PC-3 (cell line): ENCODE measurements at regions of chr4 and their contacts with region 1.

Region 1: GRCh38 chr4:3114377-3114776 is 39.9 kb downstream of the HTT start:
- DNase-seq: no peak
- ATAC-seq: no peak
- H3K4me3 ChIP-seq: no peak overlapping the region
- H3K27ac ChIP-seq: no peak overlapping the region
- H3K4me1 ChIP-seq: peaks cover 20% of the 10 kb centered on the region; the same call in 1 of the 2 replicates
- H3K27me3 ChIP-seq: no peaks in the 10 kb centered on the region
- CTCF ChIP-seq: no peak

Region 2: DNA sequence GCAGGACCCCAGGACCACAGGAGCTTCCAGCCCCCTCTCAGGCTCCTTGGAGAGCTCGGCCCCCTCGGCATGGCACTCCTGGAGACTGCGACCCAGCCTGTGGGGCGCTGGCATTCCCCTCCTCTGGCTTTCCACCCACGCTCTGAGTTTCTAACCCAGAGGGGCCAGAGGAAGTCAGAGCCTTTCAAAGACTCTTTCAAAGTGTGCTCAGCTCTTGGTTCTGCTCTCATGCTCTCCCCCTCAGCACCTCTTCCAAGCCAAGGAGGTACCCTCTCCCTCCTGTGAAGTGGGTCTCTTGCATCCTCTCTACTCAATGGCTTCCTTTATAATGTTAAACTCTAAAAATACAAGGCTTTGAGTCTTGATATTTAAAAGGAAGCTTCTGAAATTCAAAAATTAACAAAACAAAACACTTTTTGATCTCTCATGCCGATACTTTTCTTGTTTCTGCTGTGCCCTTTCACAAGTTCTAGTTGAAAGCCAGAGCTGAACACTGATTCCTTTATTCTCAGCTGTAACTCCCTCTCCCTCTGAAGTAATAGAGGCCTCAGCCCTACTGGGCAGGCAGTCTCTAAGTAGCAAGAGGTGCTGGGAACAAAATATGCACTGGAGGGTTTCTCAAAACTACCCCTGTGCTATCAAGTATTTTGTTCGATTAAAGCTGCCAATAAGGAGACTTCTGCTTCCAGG is 972.5 kb before region 1 on chr4:
- CTCF ChIA-PET with region 1: no interaction called
- POLR2A ChIA-PET with region 1: no interaction called
- intact Hi-C with region 1: no loop called
- DNase-seq: no peak
- ATAC-seq: no peak
- H3K4me3 ChIP-seq: no peak overlapping the region
- H3K27ac ChIP-seq: no peak overlapping the region
- H3K4me1 ChIP-seq: no peaks in the 10 kb centered on the region; the same call in 1 of the 2 replicates
- H3K27me3 ChIP-seq: no peaks in the 10 kb centered on the region
- CTCF ChIP-seq: no peak

Region 3: DNA sequence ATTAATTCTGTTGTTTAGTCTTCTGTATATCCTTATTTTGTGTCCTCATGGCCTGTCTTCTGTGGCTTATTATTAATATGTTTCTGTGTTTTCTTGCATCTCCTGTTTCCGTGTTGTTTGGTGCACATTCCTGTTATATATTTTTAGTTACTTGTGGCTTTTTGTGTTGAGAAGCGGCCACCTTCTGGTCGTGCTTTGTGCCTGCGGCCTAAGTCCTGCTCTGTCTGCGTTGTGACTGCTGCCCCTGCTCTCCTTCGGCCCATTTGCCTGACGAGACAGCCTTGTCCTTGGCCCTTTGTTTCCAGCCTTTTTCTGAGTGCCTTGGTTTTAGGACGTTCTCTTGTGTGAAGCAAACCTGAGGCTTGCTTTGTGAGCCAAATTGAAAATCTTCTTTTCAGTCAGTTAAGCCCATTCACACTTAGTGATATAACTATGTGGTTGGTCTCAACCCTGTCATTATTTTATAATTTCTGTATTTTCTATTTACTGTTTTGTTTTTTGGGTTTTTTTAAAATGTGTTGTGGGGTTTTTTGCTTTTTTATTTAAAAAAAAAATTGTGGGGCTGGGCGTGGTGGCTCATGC is 402.0 kb before region 1 on chr4:
- CTCF ChIA-PET with region 1: no interaction called
- POLR2A ChIA-PET with region 1: no interaction called
- intact Hi-C with region 1: no loop called
- DNase-seq: no peak
- ATAC-seq: no peak
- H3K4me3 ChIP-seq: no peak overlapping the region
- H3K27ac ChIP-seq: no peak overlapping the region
- H3K4me1 ChIP-seq: no peaks in the 10 kb centered on the region
- H3K27me3 ChIP-seq: no peaks in the 10 kb centered on the region
- CTCF ChIP-seq: peak; percentile 48

Region 4: DNA sequence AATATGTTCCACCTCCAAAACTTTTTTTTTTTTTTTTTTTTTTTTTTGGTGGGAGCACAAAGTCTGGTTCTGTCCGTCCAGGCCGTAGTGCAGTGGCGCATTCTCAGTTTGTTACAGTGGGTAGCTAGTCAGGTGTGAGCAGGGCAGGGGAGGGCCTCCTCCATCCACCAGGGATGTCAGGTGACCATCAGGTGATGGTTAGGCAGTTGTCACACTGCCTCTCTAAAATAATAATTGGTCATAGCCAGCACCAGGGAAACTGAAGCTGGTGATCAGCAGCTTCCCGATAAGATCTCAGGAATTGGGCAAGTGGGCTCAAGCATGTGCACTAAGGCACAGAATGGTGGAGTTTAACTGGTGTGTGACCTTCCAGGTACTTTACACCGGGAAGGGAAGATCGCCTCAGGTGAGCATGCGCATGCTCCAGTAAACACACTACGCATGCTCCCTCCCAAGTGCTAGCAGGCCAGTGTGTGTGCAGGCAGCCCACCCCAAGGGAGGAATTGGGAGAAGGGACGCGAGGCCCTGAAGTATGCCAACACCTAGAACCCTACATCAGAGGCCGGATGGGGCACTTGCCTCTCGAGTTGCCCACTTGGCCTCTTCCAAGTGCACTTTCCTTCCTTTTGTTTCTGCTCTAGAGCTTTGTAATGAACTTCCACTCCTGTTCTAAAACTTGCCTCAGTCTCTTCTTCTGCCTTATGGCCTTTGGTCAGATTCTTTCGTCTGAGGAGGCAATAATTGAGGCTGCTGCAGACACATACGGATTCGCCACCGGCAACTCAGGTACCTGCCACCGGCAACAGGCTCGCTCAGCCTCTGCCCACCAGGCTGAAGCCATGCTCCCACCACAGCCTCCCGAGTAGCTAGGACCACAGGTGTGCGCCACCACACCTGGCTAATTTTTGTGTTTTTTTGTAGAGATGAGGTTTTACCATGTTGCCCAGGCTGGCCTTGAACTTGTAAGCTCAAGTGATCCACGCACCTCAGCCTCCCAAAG is 385.2 kb before region 1 on chr4:
- CTCF ChIA-PET with region 1: interaction called, 11 read pairs
- POLR2A ChIA-PET with region 1: no interaction called
- intact Hi-C with region 1: no loop called
- DNase-seq: no peak
- ATAC-seq: no peak
- H3K4me3 ChIP-seq: no peak overlapping the region
- H3K27ac ChIP-seq: no peak overlapping the region
- H3K4me1 ChIP-seq: no peaks in the 10 kb centered on the region
- H3K27me3 ChIP-seq: no peaks in the 10 kb centered on the region
- CTCF ChIP-seq: no peak